Gastrocnemius medialis (tissue), 4 donors: ENCODE measurements at regions of chr11 and their contacts with region 1.

Region 1: GRCh38 chr11:62705880-62706849 is 1.1 kb downstream of the BSCL2 start:
- DNase-seq: peak; percentile 86 to 93
- ATAC-seq: peak; percentile 65 to 80
- H3K4me3 ChIP-seq: peak overlapping the region; percentile 79 to 93 (median 87)
- H3K27ac ChIP-seq: peak overlapping the region; percentile 84 to 94 (median 89)
- H3K4me1 ChIP-seq: peaks cover 34% of the 10 kb centered on the region in 2 donors
- H3K27me3 ChIP-seq: no peaks in the 10 kb centered on the region
- CTCF ChIP-seq: no peak
- POLR2A ChIP-seq: peak; percentile 53 to 67

Region 2: GRCh38 chr11:62601394-62602140 is 104.6 kb before region 1 on chr11 and contains the start of gene MTA2:
- in situ Hi-C with region 1: loop called in 1 of 4 experiments (anchors 25 kb)
- intact Hi-C with region 1: loop called (anchors 5 kb)
- DNase-seq: peak; percentile 97
- ATAC-seq: peak; percentile 83 to 85
- H3K4me3 ChIP-seq: peak within 1 kb of the TSS; percentile 84 to 99 (median 98)
- H3K27ac ChIP-seq: peak within 1 kb of the TSS; percentile 87 to 97 (median 94)
- H3K4me1 ChIP-seq: peaks cover 17 to 29% of the 10 kb centered on the region in 2 donors
- H3K27me3 ChIP-seq: no peaks in the 10 kb centered on the region
- CTCF ChIP-seq: no peak
- POLR2A ChIP-seq: peak; percentile 43 to 57
- total RNA-seq, gene MTA2: 28.0 to 47.1 (median 31.7) TPM

Region 3: GRCh38 chr11:62621567-62622470 is 84.3 kb before region 1 on chr11 and contains the start of gene B3GAT3:
- in situ Hi-C with region 1: loop called in 1 of 4 experiments (anchors 25 kb)
- intact Hi-C with region 1: no loop called
- DNase-seq: peak; percentile 97 to 99
- ATAC-seq: peak; percentile 95 to 97
- H3K4me3 ChIP-seq: peak within 1 kb of the TSS; percentile 65 to 96 (median 76)
- H3K27ac ChIP-seq: peak within 1 kb of the TSS; percentile 76 to 92 (median 82)
- H3K4me1 ChIP-seq: peaks cover 8 to 9% of the 10 kb centered on the region in 2 donors
- H3K27me3 ChIP-seq: no peaks in the 10 kb centered on the region
- CTCF ChIP-seq: peak in 2 of 5 experiments; percentile 10
- POLR2A ChIP-seq: peak; percentile 75 to 77
- total RNA-seq, gene B3GAT3: 4.4 to 21.4 (median 9.8) TPM

Region 4: DNA sequence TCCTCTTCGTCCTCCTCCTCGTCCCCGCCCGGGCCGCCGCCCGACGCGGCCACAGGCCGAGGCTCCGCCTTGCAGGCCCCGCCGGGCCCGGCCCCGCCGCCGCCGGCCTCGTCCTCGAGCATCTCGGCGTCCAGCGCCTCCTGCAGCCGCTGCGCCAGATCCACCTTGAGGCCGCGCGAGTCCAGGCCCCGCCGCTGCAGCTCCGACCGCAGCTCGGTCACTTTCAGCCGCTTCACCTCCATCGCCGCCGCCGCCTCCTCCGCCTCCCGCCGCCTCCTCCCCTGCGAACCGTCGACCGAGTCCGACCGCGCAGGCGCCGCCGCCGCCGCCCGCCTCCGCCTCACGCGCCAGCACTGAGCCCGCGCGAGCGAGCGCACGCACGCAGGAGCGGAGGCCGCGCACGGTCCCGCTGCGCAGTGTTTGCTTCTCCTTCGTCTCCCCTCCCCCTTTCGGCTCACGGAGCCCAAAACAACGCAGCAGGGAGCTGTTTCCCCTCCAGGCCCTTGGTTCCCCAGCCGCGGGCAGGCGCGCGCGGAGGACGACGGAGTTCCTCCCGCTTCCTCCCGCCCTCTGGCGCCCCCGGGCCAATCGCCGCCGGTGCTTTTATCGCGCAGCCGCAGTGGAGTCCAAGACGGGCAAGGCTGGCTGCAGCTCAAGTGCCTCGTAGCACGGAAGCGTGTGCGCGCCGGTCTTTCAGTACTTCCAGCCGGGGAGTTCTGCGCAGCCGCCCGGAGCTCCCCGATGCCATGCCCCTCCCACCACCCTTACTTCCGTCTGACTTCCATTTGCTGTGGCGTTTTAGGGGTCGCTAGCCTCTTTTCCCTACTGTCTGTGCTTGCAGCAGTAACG is 21.0 kb after region 1 on chr11 and contains the start of gene HNRNPUL2:
- in situ Hi-C with region 1: no loop called
- intact Hi-C with region 1: loop called (anchors 1 kb)
- DNase-seq: peak; percentile 97 to 99
- ATAC-seq: peak; percentile 79 to 81
- H3K4me3 ChIP-seq: peak within 1 kb of the TSS; percentile 63 to 95 (median 80)
- H3K27ac ChIP-seq: peak within 1 kb of the TSS; percentile 87 to 94 (median 90)
- H3K4me1 ChIP-seq: peaks cover 44 to 47% of the 10 kb centered on the region in 2 donors
- H3K27me3 ChIP-seq: no peaks in the 10 kb centered on the region
- CTCF ChIP-seq: no peak
- POLR2A ChIP-seq: peak; percentile 93 to 97
- total RNA-seq, gene HNRNPUL2: 4.8 to 14.9 (median 11.8) TPM

Region 5: GRCh38 chr11:62737196-62737595 is 31.0 kb after region 1 on chr11:
- in situ Hi-C with region 1: no loop called
- intact Hi-C with region 1: no loop called
- DNase-seq: no peak
- ATAC-seq: no peak
- H3K4me3 ChIP-seq: no peak overlapping the region
- H3K27ac ChIP-seq: no peak overlapping the region
- H3K4me1 ChIP-seq: no peaks in the 10 kb centered on the region
- H3K27me3 ChIP-seq: no peaks in the 10 kb centered on the region
- CTCF ChIP-seq: no peak
- POLR2A ChIP-seq: no peak

Region 6: DNA sequence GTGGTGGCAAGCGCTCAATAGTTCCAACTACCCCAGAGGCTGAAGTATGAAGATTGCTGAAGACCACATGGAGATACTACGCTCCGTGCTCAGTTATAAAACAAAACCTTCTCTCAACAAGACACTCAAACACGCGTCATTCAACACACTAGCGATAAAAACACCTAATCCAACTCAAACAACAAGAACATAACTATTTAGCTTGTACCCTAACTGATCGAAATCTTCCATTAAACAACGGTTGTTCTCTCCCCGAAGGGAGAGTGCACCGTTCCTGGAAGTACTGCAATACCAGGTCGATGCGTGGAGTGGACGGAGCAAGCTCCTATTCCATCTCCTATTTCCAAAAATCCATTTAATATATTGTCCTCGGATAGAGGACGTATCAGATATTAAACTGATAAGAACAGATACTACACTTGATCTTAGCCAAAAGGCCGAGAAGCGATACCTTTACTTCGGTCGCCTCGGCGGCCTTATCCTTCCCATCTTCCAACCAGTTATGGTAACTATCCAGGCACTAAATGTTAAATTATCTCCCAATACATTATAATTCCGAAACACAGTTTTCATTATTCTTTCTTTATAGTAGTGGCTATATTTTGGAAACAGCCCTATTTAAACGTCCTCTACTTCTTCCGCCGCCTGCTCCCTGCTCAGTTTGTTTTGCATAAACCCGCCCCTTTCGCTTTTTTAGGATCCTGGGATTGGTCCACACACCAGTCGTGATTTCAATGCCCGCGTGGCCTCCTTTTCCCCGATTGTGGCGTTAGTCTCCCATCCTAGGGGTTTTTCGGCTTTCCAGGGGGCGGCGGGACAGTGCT is 135.4 kb after region 1 on chr11:
- in situ Hi-C with region 1: no loop called
- intact Hi-C with region 1: loop called (anchors 5 kb)
- DNase-seq: peak; percentile 85 to 91
- ATAC-seq: peak; percentile 73 to 76
- H3K4me3 ChIP-seq: peak overlapping the region; percentile 82 to 100 (median 96)
- H3K27ac ChIP-seq: peak overlapping the region; percentile 97 to 99 (median 98)
- H3K4me1 ChIP-seq: peaks cover 20% of the 10 kb centered on the region in 2 donors
- H3K27me3 ChIP-seq: no peaks in the 10 kb centered on the region
- CTCF ChIP-seq: peak in 1 of 5 experiments; percentile 5
- POLR2A ChIP-seq: peak; percentile 99 to 100